B cell (primary cell): ENCODE measurements at regions of chr12 and their contacts with region 1.

Region 1: GRCh38 chr12:116708826-116709756 is 28.8 kb downstream of the SPRING1 start:
- DNase-seq: peak; percentile 73
- ATAC-seq: peak; percentile 81
- H3K4me3 ChIP-seq: peak overlapping the region in 2 of 5 experiments; percentile 3 to 5
- H3K4me3 Mint-ChIP-seq: peak overlapping the region; percentile 54
- H3K27ac ChIP-seq: no peak overlapping the region
- H3K27ac Mint-ChIP-seq: no peak overlapping the region
- H3K4me1 ChIP-seq: peaks cover 20 to 24% of the 10 kb centered on the region in 2 donors
- H3K4me1 Mint-ChIP-seq: peaks cover 30% of the 10 kb centered on the region
- H3K27me3 ChIP-seq: peaks cover 0 to 8% (median 3%) of the 10 kb centered on the region in 4 experiments
- H3K27me3 Mint-ChIP-seq: peaks cover 9% of the 10 kb centered on the region
- CTCF ChIP-seq: peak; percentile 81

Region 2: GRCh38 chr12:115983226-115983798 is 725.8 kb before region 1 on chr12:
- CTCF ChIA-PET with region 1: interaction called, 13 read pairs
- POLR2A ChIA-PET with region 1: no interaction called
- intact Hi-C with region 1: no loop called
- DNase-seq: no peak
- ATAC-seq: no peak
- H3K4me3 ChIP-seq: no peak overlapping the region
- H3K4me3 Mint-ChIP-seq: no peak overlapping the region
- H3K27ac ChIP-seq: no peak overlapping the region
- H3K27ac Mint-ChIP-seq: no peak overlapping the region
- H3K4me1 ChIP-seq: peaks cover 2% of the 10 kb centered on the region in 2 donors
- H3K4me1 Mint-ChIP-seq: peaks cover 7% of the 10 kb centered on the region
- H3K27me3 ChIP-seq: no peaks in the 10 kb centered on the region
- H3K27me3 Mint-ChIP-seq: no peaks in the 10 kb centered on the region
- CTCF ChIP-seq: no peak

Region 3: GRCh38 chr12:116015525-116015924 is 693.6 kb before region 1 on chr12:
- CTCF ChIA-PET with region 1: interaction called, 14 read pairs
- POLR2A ChIA-PET with region 1: no interaction called
- intact Hi-C with region 1: no loop called
- DNase-seq: peak; percentile 27
- ATAC-seq: peak; percentile 49
- H3K4me3 ChIP-seq: no peak overlapping the region
- H3K4me3 Mint-ChIP-seq: no peak overlapping the region
- H3K27ac ChIP-seq: no peak overlapping the region
- H3K27ac Mint-ChIP-seq: no peak overlapping the region
- H3K4me1 ChIP-seq: no peaks in the 10 kb centered on the region
- H3K4me1 Mint-ChIP-seq: no peaks in the 10 kb centered on the region
- H3K27me3 ChIP-seq: no peaks in the 10 kb centered on the region
- H3K27me3 Mint-ChIP-seq: no peaks in the 10 kb centered on the region
- CTCF ChIP-seq: peak; percentile 27

Region 4: GRCh38 chr12:116142936-116143898 is 565.9 kb before region 1 on chr12:
- CTCF ChIA-PET with region 1: interaction called, 13 read pairs
- POLR2A ChIA-PET with region 1: no interaction called
- intact Hi-C with region 1: loop called (anchors 5 kb)
- DNase-seq: no peak
- ATAC-seq: peak; percentile 36
- H3K4me3 ChIP-seq: no peak overlapping the region
- H3K4me3 Mint-ChIP-seq: peak overlapping the region; percentile 38
- H3K27ac ChIP-seq: peak overlapping the region in 1 of 2 donors; percentile 41
- H3K27ac Mint-ChIP-seq: peak overlapping the region; percentile 17
- H3K4me1 ChIP-seq: peaks cover 18 to 32% of the 10 kb centered on the region in 2 donors
- H3K4me1 Mint-ChIP-seq: peaks cover 58% of the 10 kb centered on the region
- H3K27me3 ChIP-seq: no peaks in the 10 kb centered on the region
- H3K27me3 Mint-ChIP-seq: no peaks in the 10 kb centered on the region
- CTCF ChIP-seq: no peak

Region 5: DNA sequence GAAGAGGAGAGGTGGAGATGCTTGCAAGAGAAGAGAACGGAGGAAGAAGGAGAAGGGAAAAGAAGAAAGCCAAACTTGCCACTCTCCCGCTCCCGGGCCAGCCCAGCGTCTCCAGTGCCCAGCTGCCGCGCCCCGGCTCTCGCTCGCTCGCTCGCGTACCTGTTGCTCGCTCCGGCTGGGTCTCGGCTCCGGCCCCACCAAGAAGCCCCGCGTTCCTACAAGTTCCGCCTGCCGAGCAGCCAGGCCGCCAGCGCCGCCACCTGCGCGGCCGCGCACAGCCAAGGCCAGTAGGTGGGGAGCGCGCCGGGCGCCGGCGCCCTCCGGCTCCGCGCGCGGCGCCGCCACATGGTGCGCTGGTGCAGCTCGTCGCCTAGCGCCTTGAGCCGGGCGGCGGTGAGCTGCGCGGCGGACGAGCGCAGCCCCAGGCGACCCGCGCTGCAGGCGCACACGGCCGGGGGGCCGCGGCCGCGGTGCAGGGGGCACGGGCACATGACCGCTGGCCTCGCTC is 171.8 kb after region 1 on chr12:
- CTCF ChIA-PET with region 1: interaction called, 69 read pairs
- POLR2A ChIA-PET with region 1: interaction called, 11 read pairs
- intact Hi-C with region 1: no loop called
- DNase-seq: peak; percentile 79
- ATAC-seq: peak; percentile 80
- H3K4me3 ChIP-seq: peak overlapping the region; percentile 42 to 81 (median 58)
- H3K4me3 Mint-ChIP-seq: peak overlapping the region; percentile 93
- H3K27ac ChIP-seq: no peak overlapping the region
- H3K27ac Mint-ChIP-seq: peak overlapping the region; percentile 80
- H3K4me1 ChIP-seq: peaks cover 44 to 46% of the 10 kb centered on the region in 2 donors
- H3K4me1 Mint-ChIP-seq: peaks cover 51% of the 10 kb centered on the region
- H3K27me3 ChIP-seq: peaks cover 0 to 48% (median 19%) of the 10 kb centered on the region in 4 experiments
- H3K27me3 Mint-ChIP-seq: peaks cover 30% of the 10 kb centered on the region
- CTCF ChIP-seq: peak; percentile 9